ENCODE measurements at regions of chr22 and their contacts with region 1.

Region 1: DNA sequence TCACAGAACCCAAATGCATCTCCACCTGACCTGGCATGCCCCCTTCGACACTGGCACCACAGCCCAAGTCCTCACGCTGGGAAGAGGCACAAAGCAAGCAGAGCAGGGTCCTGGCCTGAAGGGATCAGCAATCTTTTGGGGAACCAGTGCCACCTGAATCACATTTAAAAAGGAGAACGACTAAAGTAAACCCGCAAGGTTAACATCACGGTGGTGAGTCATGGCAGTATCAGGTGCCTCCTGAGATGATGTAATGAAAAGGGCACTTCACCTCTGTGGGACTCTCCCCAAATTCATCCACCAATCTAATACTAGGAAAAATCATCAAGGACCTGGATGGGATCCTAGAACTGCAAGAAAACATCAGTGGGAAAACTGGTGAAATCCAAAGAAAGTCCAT is 44.9 kb downstream of the PACSIN2 start:
- DNase-seq: peak; percentile 62
- H3K4me3 Mint-ChIP-seq: peak overlapping the region; percentile 29
- H3K27ac Mint-ChIP-seq: peak overlapping the region; percentile 90
- H3K4me1 Mint-ChIP-seq: peaks cover 79% of the 10 kb centered on the region
- H3K27me3 Mint-ChIP-seq: no peaks in the 10 kb centered on the region
- CTCF ChIP-seq: no peak

Region 2: GRCh38 chr22:43004362-43005035 is 34.5 kb after region 1 on chr22:
- CTCF ChIA-PET with region 1: interaction called, 3 read pairs
- intact Hi-C with region 1: loop called (anchors 2 kb)
- DNase-seq: peak; percentile 47
- H3K4me3 Mint-ChIP-seq: peak overlapping the region; percentile 4
- H3K27ac Mint-ChIP-seq: peak overlapping the region; percentile 11
- H3K4me1 Mint-ChIP-seq: peaks cover 89% of the 10 kb centered on the region
- H3K27me3 Mint-ChIP-seq: no peaks in the 10 kb centered on the region
- CTCF ChIP-seq: no peak